MCF 10A (cell line): ENCODE measurements at regions of chr1 and their contacts with region 1.

Region 1: GRCh38 chr1:224922404-224923164 is 6.9 kb upstream of the DNAH14 start:
- DNase-seq: peak; percentile 76
- H3K4me3 Mint-ChIP-seq: no peak overlapping the region
- H3K27ac Mint-ChIP-seq: no peak overlapping the region
- H3K4me1 Mint-ChIP-seq: peaks cover 4% of the 10 kb centered on the region
- H3K27me3 Mint-ChIP-seq: no peaks in the 10 kb centered on the region
- CTCF ChIP-seq: peak; percentile 99

Region 2: GRCh38 chr1:223712194-223712849 is 1210.3 kb before region 1 on chr1 and contains the start of gene CAPN2:
- CTCF ChIA-PET with region 1: interaction called, 3 read pairs
- POLR2A ChIA-PET with region 1: no interaction called
- intact Hi-C with region 1: loop called (anchors 10 kb)
- DNase-seq: peak; percentile 94
- H3K4me3 Mint-ChIP-seq: peak within 1 kb of the TSS; percentile 77
- H3K27ac Mint-ChIP-seq: peak within 1 kb of the TSS; percentile 88
- H3K4me1 Mint-ChIP-seq: peaks cover 61% of the 10 kb centered on the region
- H3K27me3 Mint-ChIP-seq: no peaks in the 10 kb centered on the region
- CTCF ChIP-seq: peak; percentile 98
- total RNA-seq, gene CAPN2: 513 and 622 TPM in 2 replicates

Region 3: GRCh38 chr1:224521904-224522734 is 400.5 kb before region 1 on chr1:
- CTCF ChIA-PET with region 1: interaction called, 375 read pairs
- POLR2A ChIA-PET with region 1: no interaction called
- intact Hi-C with region 1: no loop called
- DNase-seq: no peak
- H3K4me3 Mint-ChIP-seq: no peak overlapping the region
- H3K27ac Mint-ChIP-seq: no peak overlapping the region
- H3K4me1 Mint-ChIP-seq: peaks cover 8% of the 10 kb centered on the region
- H3K27me3 Mint-ChIP-seq: no peaks in the 10 kb centered on the region
- CTCF ChIP-seq: peak; percentile 7

Region 4: DNA sequence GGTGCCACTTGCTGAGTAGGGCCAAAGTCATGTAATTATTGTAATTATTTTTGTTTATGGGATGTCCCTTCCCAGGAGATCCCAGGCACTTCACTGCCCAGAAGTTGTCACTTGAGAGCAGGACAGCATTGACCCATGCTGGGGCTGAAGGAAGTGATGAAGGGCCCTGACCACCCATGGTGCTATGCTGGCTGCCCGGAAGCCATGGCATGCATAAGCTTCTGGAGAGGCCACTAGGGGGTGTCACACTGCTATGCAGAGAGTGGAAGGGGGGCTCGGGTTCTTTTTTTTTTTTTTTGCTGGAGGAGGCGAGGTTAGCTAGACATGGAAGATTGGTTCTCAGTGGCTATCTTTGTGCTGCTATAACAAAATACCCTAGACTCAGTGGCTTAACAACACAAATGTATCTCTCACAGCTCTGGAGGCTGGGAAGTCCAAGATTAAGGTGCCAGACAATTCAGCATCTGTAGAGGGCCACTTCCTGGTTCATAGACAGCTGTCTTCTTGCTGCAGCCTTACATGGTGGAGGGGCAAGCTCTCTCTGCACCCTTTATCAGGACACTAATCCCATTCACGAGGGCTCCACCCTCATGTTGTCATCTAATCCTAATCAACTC is 221.6 kb before region 1 on chr1:
- CTCF ChIA-PET with region 1: interaction called, 10 read pairs
- POLR2A ChIA-PET with region 1: no interaction called
- intact Hi-C with region 1: loop called (anchors 5 kb)
- DNase-seq: peak; percentile 58
- H3K4me3 Mint-ChIP-seq: no peak overlapping the region
- H3K27ac Mint-ChIP-seq: no peak overlapping the region
- H3K4me1 Mint-ChIP-seq: no peaks in the 10 kb centered on the region
- H3K27me3 Mint-ChIP-seq: no peaks in the 10 kb centered on the region
- CTCF ChIP-seq: peak; percentile 39

Region 5: GRCh38 chr1:224884361-224884801 is 38.2 kb before region 1 on chr1:
- CTCF ChIA-PET with region 1: interaction called, 14 read pairs
- POLR2A ChIA-PET with region 1: interaction called, 4 read pairs
- intact Hi-C with region 1: no loop called
- DNase-seq: no peak
- H3K4me3 Mint-ChIP-seq: no peak overlapping the region
- H3K27ac Mint-ChIP-seq: no peak overlapping the region
- H3K4me1 Mint-ChIP-seq: peaks cover 26% of the 10 kb centered on the region
- H3K27me3 Mint-ChIP-seq: no peaks in the 10 kb centered on the region
- CTCF ChIP-seq: no peak

Region 6: GRCh38 chr1:224906340-224906739 is 16.2 kb before region 1 on chr1:
- CTCF ChIA-PET with region 1: interaction called, 35 read pairs
- POLR2A ChIA-PET with region 1: interaction called, 3 read pairs
- intact Hi-C with region 1: no loop called
- DNase-seq: no peak
- H3K4me3 Mint-ChIP-seq: no peak overlapping the region
- H3K27ac Mint-ChIP-seq: no peak overlapping the region
- H3K4me1 Mint-ChIP-seq: no peaks in the 10 kb centered on the region
- H3K27me3 Mint-ChIP-seq: peaks cover 56% of the 10 kb centered on the region
- CTCF ChIP-seq: no peak